Activated CD8-positive, alpha-beta T cell treated with anti-CD3 and anti-CD28 coated beads for 36 hours (primary cell): ENCODE measurements at regions of chr7 and their contacts with region 1.

Region 1: GRCh38 chr7:146090023-146090645 is 26.5 kb upstream of the CNTNAP2 start:
- DNase-seq: peak; percentile 6
- ATAC-seq: no peak
- H3K4me3 Mint-ChIP-seq: no peak overlapping the region
- H3K27ac Mint-ChIP-seq: no peak overlapping the region
- H3K4me1 Mint-ChIP-seq: no peaks in the 10 kb centered on the region
- H3K27me3 Mint-ChIP-seq: no peaks in the 10 kb centered on the region
- CTCF ChIP-seq: peak; percentile 73

Region 2: DNA sequence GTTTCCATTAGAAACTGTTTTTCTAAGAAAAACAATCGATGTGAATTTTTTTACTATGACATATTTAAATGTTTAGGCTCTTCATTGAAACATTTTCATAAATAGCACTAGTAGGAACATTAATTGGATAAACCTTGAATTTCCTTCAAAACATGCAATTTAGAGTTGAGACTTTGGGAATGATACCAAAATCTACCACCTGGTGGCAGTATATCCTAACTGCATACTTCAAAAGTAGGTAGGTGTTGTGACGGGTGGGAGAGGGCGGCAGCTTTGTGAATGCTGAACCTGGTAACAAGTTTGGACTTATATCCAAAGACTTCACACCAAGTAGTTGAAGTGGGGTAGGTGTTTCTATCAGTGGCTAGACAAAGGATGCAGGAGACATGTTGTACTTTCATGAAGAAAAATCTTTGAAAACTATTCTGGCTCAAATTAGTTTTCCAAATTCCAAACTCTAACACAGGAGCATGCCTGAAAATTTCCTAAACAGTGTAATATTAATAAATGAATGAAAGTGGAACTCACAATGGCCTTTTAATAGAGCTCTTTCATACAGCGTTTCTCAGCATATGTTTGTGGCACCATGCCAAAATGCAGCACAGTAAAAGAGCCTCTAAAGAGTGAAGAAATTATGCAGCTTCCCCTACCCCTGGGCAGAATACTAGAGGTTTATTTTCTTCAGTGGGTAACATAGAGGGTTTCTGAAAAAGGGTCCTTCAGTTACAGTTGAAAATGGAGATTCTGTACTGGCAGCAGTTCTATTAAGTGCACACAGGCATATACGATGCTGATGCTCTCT is 1053.3 kb before region 1 on chr7:
- CTCF ChIA-PET with region 1: interaction called, 8 read pairs
- POLR2A ChIA-PET with region 1: no interaction called
- intact Hi-C with region 1: loop called (anchors 2 kb)
- DNase-seq: peak; percentile 51
- ATAC-seq: peak; percentile 64
- H3K4me3 Mint-ChIP-seq: no peak overlapping the region
- H3K27ac Mint-ChIP-seq: no peak overlapping the region
- H3K4me1 Mint-ChIP-seq: peaks cover 2% of the 10 kb centered on the region
- H3K27me3 Mint-ChIP-seq: peaks cover 8% of the 10 kb centered on the region
- CTCF ChIP-seq: peak; percentile 84